WTC11 (cell line): ENCODE measurements at regions of chr1 and their contacts with region 1.

Region 1: DNA sequence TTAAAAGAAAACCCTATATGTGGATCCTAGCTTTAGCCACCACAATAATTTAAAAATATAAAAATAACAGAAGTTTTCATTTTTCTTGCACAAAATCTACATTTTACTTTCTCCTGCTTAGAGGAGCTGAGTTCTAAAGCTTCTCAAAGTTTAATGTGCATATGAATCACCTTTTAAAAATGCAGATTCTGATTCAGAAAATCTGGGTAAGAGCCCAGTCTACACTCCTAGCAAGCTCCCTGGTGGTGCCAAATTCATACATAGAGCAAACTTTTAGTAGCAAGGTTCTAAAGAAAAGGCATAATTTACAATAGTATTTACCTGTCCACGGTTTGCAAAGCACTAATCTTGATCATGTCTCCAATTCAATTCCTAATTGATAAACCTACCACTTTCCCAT is 19.3 kb downstream of the RSBN1 start:
- DNase-seq: no peak
- ATAC-seq: no peak
- H3K4me3 Mint-ChIP-seq: no peak overlapping the region
- H3K27ac Mint-ChIP-seq: no peak overlapping the region
- H3K4me1 Mint-ChIP-seq: peaks cover 20% of the 10 kb centered on the region
- H3K27me3 Mint-ChIP-seq: no peaks in the 10 kb centered on the region
- CTCF ChIP-seq: no peak

Region 2: DNA sequence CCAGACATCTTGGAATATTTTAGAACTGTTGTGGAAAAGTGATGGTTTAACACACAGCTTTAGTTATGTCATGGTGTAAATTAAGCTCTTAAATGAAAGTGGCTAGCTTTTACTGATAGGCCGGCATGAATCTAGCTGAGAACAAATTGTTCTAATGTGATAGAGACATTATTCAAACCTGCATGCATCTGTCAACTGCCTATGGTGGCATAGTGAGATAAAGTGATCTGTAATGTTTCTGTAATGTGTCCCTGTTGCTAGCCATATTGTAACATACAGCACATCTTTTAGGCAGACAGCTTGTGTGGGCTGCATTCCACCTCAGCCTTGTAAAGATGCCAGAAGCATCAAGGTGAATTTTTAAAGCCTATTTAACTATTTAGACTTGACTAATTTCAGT is 704.0 kb before region 1 on chr1:
- CTCF ChIA-PET with region 1: no interaction called
- POLR2A ChIA-PET with region 1: interaction called, 12 read pairs
- DNase-seq: no peak
- ATAC-seq: no peak
- H3K4me3 Mint-ChIP-seq: no peak overlapping the region
- H3K27ac Mint-ChIP-seq: no peak overlapping the region
- H3K4me1 Mint-ChIP-seq: no peaks in the 10 kb centered on the region
- H3K27me3 Mint-ChIP-seq: no peaks in the 10 kb centered on the region
- CTCF ChIP-seq: no peak

Region 3: GRCh38 chr1:113818578-113818977 is 25.6 kb after region 1 on chr1:
- CTCF ChIA-PET with region 1: no interaction called
- POLR2A ChIA-PET with region 1: no interaction called
- DNase-seq: no peak
- ATAC-seq: no peak
- H3K4me3 Mint-ChIP-seq: no peak overlapping the region
- H3K27ac Mint-ChIP-seq: no peak overlapping the region
- H3K4me1 Mint-ChIP-seq: no peaks in the 10 kb centered on the region
- H3K27me3 Mint-ChIP-seq: no peaks in the 10 kb centered on the region; the same call in 1 of the 2 replicates
- CTCF ChIP-seq: no peak